ENCODE measurements at regions of chr6 and their contacts with region 1.

Region 1: GRCh38 chr6:27295301-27296081 is 16.6 kb downstream of the POM121L2 start:
- DNase-seq: peak; percentile 65 to 93 (median 72)
- ATAC-seq: peak; percentile 67
- H3K4me3 ChIP-seq: peak overlapping the region; percentile 67
- H3K27ac ChIP-seq: peak overlapping the region; percentile 17; the same call in 2 of the 3 replicates
- H3K4me1 ChIP-seq: peaks cover 4 to 14% of the 10 kb centered on the region in 2 experiments; a peak in 3 of 5 replicates
- H3K27me3 ChIP-seq: no peaks in the 10 kb centered on the region
- CTCF ChIP-seq: no peak
- EP300 ChIP-seq: no peak; the same call in none of the 2 replicates
- POLR2A ChIP-seq: no peak
- RAD21 ChIP-seq: peak in 1 of 2 experiments; percentile 22; a peak in 2 of 4 replicates

Region 2: DNA sequence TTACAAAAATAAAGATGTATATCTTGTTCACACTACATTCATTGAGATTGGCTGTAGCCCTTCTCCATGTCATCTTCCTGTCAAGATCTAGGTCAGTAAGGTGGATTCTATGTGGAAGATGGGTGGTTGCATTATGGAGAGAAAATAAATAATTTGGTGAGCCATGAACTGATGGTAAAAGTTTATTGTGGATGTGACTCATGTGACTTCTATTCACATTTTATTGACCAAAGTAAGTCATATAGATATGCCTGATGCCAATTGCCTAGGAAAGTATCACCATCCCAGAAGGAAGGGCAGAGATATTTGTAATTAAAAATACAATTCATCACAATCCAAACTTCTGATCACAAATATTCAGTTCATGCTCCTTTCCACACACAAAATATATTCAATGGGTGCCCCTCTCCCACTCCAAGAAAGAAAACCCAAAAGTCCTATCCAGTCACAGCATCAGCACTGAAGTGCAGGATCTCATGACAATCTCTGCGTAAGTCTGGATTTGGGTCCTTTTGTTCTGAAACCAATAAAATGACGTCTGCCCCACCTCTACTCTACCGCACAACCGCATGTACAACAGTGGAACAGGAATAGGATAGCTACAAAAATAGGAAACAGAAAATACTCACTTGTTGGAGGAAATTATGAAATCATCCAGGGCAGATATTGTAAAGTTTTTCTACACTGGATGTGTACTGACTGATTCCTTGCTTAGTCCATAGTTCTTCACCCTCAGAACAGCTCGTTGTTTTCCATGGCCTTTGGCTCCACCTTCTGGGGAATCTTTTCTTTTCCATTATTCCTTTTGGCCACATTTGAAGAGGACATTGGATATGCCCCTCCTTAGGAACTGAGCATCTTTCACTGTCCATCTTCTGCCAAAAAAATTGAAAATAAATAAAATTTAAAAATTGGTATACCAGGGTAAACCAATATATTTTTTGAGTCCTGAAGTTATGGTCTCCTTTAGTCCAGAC is 1405.3 kb before region 1 on chr6:
- CTCF ChIA-PET with region 1: no interaction called
- POLR2A ChIA-PET with region 1: no interaction called
- in situ Hi-C with region 1: no loop called
- intact Hi-C with region 1: no loop called
- DNase-seq: peak; percentile 16 to 56 (median 22)
- ATAC-seq: peak; percentile 87
- H3K4me3 ChIP-seq: no peak overlapping the region
- H3K27ac ChIP-seq: no peak overlapping the region
- H3K4me1 ChIP-seq: no peaks in the 10 kb centered on the region
- H3K27me3 ChIP-seq: no peaks in the 10 kb centered on the region
- CTCF ChIP-seq: peak; percentile 55 to 83 (median 64)
- EP300 ChIP-seq: no peak
- POLR2A ChIP-seq: no peak
- RAD21 ChIP-seq: peak; percentile 95 to 96

Region 3: DNA sequence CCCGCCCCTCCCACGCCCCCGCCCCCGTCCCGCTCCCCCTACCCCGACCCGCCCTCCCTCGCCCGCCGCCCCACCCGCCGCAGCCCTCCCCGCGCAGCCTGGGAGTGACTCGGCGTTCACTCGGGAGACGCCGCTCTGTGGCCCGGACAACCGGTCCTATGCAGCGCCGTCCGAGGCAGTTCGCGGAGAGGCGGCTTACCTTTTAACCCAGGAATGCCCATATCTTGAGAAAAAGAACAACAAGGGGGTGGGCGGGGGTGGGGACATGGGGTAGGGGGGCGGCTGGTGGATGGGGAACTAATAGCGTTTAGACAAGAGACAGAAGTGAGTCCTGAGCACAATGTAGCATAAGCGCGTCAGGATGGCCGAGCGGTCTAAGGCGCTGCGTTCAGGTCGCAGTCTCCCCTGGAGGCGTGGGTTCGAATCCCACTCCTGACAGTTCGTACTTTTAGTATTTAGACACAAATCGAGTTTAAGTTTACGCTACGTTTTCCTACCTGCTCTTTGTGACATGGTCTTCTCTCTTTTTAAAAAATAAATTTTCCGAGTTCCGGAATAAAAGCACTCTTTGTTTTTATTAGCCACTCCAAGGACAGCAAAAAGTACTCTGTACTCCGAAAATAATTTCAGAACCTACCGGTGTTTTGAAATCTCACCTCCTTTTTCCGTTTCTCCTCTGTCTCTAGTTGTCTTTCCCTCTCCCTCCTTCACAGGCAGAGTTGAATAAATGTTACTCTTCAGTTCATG is 774.5 kb before region 1 on chr6:
- CTCF ChIA-PET with region 1: no interaction called
- POLR2A ChIA-PET with region 1: no interaction called
- in situ Hi-C with region 1: no loop called
- intact Hi-C with region 1: no loop called
- DNase-seq: peak; percentile 94 to 98 (median 98)
- ATAC-seq: peak; percentile 78
- H3K4me3 ChIP-seq: peak overlapping the region; percentile 70
- H3K27ac ChIP-seq: peak overlapping the region; percentile 98
- H3K4me1 ChIP-seq: peaks cover 13 to 28% of the 10 kb centered on the region in 2 experiments; a peak in 4 of 5 replicates
- H3K27me3 ChIP-seq: no peaks in the 10 kb centered on the region
- CTCF ChIP-seq: peak in 1 of 3 experiments; percentile 8; a peak in 2 of 6 replicates
- EP300 ChIP-seq: peak; percentile 68
- POLR2A ChIP-seq: no peak
- RAD21 ChIP-seq: no peak

Region 4: GRCh38 chr6:26657256-26657655 is 638.2 kb before region 1 on chr6:
- CTCF ChIA-PET with region 1: no interaction called
- POLR2A ChIA-PET with region 1: no interaction called
- in situ Hi-C with region 1: no loop called
- intact Hi-C with region 1: no loop called
- DNase-seq: no peak
- ATAC-seq: no peak
- H3K4me3 ChIP-seq: no peak overlapping the region
- H3K27ac ChIP-seq: no peak overlapping the region
- H3K4me1 ChIP-seq: peaks cover 3 to 14% of the 10 kb centered on the region in 2 experiments; a peak in 3 of 5 replicates
- H3K27me3 ChIP-seq: no peaks in the 10 kb centered on the region
- CTCF ChIP-seq: no peak
- EP300 ChIP-seq: no peak
- POLR2A ChIP-seq: no peak
- RAD21 ChIP-seq: no peak

Region 5: DNA sequence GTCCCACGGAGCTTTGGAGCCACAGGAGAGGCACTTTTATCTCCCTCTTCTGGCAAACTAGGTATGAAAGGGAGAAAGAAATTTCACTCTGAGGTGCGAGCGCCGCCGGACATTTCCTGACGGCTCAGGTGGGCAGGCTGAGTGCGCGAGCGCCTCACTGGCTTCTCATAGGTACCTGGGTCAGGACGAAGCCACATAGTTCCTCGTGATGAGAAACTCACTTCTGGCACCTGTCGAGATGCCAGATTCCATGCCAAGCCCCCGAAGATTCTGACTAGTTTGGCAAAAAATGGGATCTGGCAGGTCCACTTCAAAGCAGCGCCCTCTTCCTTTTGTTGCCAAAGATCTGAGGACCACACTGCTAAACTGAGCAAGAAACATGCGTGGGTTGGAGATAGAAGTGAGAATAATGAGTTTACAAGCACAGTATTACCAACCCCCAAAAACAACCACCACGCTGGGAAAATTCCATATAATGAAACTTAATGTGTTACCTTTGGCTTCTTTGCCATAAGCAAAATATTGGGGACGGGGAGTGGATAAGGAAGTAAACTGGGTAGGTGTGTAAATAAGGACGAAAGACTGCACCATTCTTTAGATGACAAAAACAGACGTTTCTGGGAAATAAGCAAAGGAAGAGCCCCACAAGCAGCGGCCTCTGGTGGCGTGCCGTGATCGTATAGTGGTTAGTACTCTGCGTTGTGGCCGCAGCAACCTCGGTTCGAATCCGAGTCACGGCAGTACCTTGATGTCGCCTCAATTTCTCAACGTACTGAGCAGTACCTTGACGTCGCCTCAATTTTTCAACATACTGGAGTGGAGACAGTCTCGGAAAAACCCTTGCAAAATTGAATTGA is 137.8 kb before region 1 on chr6:
- CTCF ChIA-PET with region 1: no interaction called
- POLR2A ChIA-PET with region 1: no interaction called
- in situ Hi-C with region 1: no loop called
- intact Hi-C with region 1: loop called (anchors 5 kb)
- DNase-seq: peak; percentile 63 to 93 (median 70)
- ATAC-seq: peak; percentile 87
- H3K4me3 ChIP-seq: peak overlapping the region; percentile 54
- H3K27ac ChIP-seq: peak overlapping the region; percentile 46
- H3K4me1 ChIP-seq: peaks cover 10% of the 10 kb centered on the region in 2 experiments; a peak in 3 of 5 replicates
- H3K27me3 ChIP-seq: no peaks in the 10 kb centered on the region
- CTCF ChIP-seq: peak; percentile 73 to 77 (median 75)
- EP300 ChIP-seq: peak; percentile 49
- POLR2A ChIP-seq: 0 out of 2 replicates have a peak, but pooled peaks have one; percentile 12
- RAD21 ChIP-seq: peak; percentile 71 to 76

Region 6: DNA sequence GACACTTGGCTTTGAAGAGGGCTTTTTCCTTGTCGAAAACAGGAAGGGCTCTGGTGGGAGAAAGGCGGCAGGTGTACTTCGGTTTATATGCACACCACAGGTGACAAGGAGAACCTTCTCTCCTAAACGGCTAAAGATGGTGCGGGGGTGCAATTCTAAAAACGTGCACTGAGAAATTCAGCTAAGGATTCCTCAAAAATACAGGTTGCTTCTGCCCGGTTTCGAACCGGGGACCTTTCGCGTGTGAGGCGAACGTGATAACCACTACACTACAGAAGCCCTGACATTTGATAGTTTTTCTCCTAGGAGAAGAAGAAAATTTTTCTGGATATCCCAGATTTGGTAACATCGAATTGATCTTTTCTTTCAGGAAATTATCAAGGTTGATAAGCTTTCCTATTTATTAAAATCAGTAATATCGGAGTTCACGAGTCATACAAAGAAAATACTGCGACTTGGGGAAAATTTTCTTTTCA is 15.4 kb before region 1 on chr6:
- CTCF ChIA-PET with region 1: no interaction called
- POLR2A ChIA-PET with region 1: interaction called, 4 read pairs
- in situ Hi-C with region 1: no loop called
- intact Hi-C with region 1: loop called (anchors 2 kb)
- DNase-seq: peak; percentile 68 to 90 (median 76)
- ATAC-seq: peak; percentile 81
- H3K4me3 ChIP-seq: peak overlapping the region; percentile 58
- H3K27ac ChIP-seq: peak overlapping the region; percentile 70
- H3K4me1 ChIP-seq: peaks cover 4 to 6% of the 10 kb centered on the region in 2 experiments; a peak in 3 of 5 replicates
- H3K27me3 ChIP-seq: no peaks in the 10 kb centered on the region
- CTCF ChIP-seq: no peak; a peak in 2 of 6 replicates
- EP300 ChIP-seq: peak; percentile 65
- POLR2A ChIP-seq: no peak
- RAD21 ChIP-seq: no peak; a peak in 1 of 4 replicates

Region 7: DNA sequence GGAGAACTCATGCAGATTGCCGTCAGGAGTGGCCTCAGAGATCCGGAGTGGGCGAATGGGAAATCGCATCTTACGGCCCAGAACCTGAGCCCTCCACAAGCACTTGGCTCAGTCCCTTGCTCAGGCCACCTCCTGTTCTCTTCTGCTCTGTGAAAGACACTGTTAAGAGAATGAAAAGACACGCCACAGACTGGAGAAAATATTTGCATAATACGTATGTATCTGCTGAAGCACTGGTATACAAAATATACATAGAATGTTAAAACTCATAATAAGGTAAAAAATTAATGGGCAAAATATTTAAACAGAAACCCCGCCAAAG is 17.4 kb after region 1 on chr6:
- CTCF ChIA-PET with region 1: no interaction called
- POLR2A ChIA-PET with region 1: no interaction called
- in situ Hi-C with region 1: no loop called
- intact Hi-C with region 1: no loop called
- DNase-seq: no peak
- ATAC-seq: no peak
- H3K4me3 ChIP-seq: no peak overlapping the region
- H3K27ac ChIP-seq: no peak overlapping the region
- H3K4me1 ChIP-seq: peaks cover 0 to 9% of the 10 kb centered on the region in 2 experiments; a peak in 1 of 5 replicates
- H3K27me3 ChIP-seq: no peaks in the 10 kb centered on the region
- CTCF ChIP-seq: no peak
- EP300 ChIP-seq: no peak
- POLR2A ChIP-seq: no peak
- RAD21 ChIP-seq: no peak

Region 8: GRCh38 chr6:27332692-27333641 is 37.5 kb after region 1 on chr6:
- CTCF ChIA-PET with region 1: no interaction called
- POLR2A ChIA-PET with region 1: interaction called, 8 read pairs
- in situ Hi-C with region 1: no loop called
- intact Hi-C with region 1: loop called (anchors 2 kb)
- DNase-seq: peak; percentile 67 to 91 (median 78)
- ATAC-seq: peak; percentile 92
- H3K4me3 ChIP-seq: peak overlapping the region; percentile 64
- H3K27ac ChIP-seq: peak overlapping the region; percentile 82
- H3K4me1 ChIP-seq: peaks cover 0 to 5% of the 10 kb centered on the region in 2 experiments; a peak in 2 of 5 replicates
- H3K27me3 ChIP-seq: no peaks in the 10 kb centered on the region
- CTCF ChIP-seq: peak in 1 of 3 experiments; percentile 18; a peak in 1 of 6 replicates
- EP300 ChIP-seq: peak; percentile 71
- POLR2A ChIP-seq: no peak
- RAD21 ChIP-seq: no peak; a peak in 2 of 4 replicates

Region 9: DNA sequence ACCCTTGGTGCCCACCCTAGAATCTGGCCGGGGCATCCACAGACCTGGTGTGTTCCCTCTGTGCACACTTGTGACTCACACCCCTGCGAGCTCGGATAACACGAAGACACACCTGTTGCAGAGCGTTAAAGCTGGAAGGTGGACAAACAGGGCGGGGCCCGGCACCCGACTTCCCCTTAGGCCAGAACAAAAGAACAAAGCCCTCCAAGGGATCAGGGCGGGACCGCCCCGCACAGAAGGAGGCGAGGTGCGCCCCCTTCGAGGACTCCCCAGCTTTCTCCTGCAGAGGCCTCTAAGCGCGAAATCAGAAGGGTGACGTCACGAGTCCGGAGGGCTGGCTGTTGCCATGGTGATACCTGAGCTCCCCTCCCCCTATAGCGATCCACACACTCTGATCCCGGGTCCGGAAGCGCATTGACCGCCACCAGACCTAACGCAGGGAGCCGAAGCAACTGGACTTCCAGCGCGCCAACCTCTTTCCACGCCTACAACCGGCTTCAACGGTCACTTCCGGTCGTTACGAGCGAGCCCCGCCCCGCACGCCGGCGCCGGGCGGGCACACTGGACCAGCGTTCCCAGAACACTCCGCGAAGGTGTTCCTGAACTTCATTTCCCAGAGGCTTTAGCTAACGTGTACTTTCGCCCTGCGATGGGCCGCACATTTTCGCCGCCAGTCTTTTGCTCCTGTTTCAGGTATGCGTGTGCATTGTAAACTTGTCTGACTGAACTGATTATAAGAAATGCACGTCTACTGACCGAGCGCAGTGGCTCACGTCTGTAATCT is 177.3 kb after region 1 on chr6 and contains the start of gene ZNF184:
- CTCF ChIA-PET with region 1: interaction called, 3 read pairs
- POLR2A ChIA-PET with region 1: interaction called, 7 read pairs
- in situ Hi-C with region 1: no loop called
- intact Hi-C with region 1: loop called (anchors 2 kb)
- DNase-seq: peak; percentile 97 to 100 (median 98)
- ATAC-seq: peak; percentile 91
- H3K4me3 ChIP-seq: peak within 1 kb of the TSS; percentile 75
- H3K27ac ChIP-seq: peak within 1 kb of the TSS; percentile 91
- H3K4me1 ChIP-seq: peaks cover 8 to 11% of the 10 kb centered on the region in 2 experiments; a peak in 4 of 5 replicates
- H3K27me3 ChIP-seq: no peaks in the 10 kb centered on the region
- CTCF ChIP-seq: peak; percentile 31 to 42 (median 37); a peak in 5 of 6 replicates
- EP300 ChIP-seq: peak; percentile 92
- POLR2A ChIP-seq: peak; percentile 92
- RAD21 ChIP-seq: peak; percentile 10 to 18; a peak in 2 of 4 replicates
- polyA plus RNA-seq, gene ZNF184: 7.6 to 12.8 TPM

Region 10: DNA sequence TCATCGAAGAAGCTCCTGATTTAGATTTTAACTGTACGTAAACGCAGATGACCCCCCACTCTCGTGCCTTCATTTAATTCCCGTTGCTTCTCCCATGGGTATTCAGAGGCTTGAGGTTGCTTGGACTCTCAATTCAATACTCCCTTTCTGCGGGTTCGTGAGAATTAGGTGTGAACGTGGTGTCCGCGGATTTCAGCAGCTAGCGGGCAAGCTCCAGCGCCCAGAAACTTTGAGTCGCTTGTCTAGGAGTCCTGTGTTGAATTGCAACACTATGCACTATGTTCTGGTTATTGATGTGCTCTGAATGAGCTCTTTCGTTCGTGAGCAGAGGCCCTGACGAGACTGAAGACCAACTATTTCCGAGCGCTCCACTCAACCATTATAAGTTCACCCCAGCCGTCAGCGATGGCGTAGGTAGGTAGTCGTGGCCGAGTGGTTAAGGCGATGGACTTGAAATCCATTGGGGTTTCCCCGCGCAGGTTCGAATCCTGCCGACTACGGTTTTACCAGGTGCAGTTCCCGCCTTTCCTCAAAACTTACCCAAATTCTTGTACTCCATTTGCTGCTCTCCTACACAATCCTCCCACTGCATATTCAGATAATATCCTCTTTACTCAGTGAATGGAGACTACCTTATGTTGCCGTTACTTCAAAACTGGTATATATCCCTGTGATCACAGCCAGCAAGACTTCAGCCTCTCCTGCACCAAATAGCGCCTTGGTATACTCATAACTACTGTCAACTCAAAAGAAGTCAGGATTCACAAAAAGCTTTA is 250.0 kb after region 1 on chr6:
- CTCF ChIA-PET with region 1: no interaction called
- POLR2A ChIA-PET with region 1: no interaction called
- in situ Hi-C with region 1: no loop called
- intact Hi-C with region 1: loop called (anchors 5 kb)
- DNase-seq: peak; percentile 52 to 97 (median 68)
- ATAC-seq: peak; percentile 62
- H3K4me3 ChIP-seq: peak overlapping the region; percentile 50
- H3K27ac ChIP-seq: peak overlapping the region; percentile 77
- H3K4me1 ChIP-seq: peaks cover 4 to 25% of the 10 kb centered on the region in 2 experiments; a peak in 4 of 5 replicates
- H3K27me3 ChIP-seq: no peaks in the 10 kb centered on the region
- CTCF ChIP-seq: no peak
- EP300 ChIP-seq: peak; percentile 70
- POLR2A ChIP-seq: no peak
- RAD21 ChIP-seq: peak in 1 of 2 experiments; percentile 33; a peak in 1 of 4 replicates

Region 11: GRCh38 chr6:27687154-27688013 is 391.9 kb after region 1 on chr6:
- CTCF ChIA-PET with region 1: no interaction called
- POLR2A ChIA-PET with region 1: no interaction called
- in situ Hi-C with region 1: no loop called
- intact Hi-C with region 1: loop called (anchors 10 kb)
- DNase-seq: peak; percentile 78 to 97 (median 82)
- ATAC-seq: peak; percentile 89
- H3K4me3 ChIP-seq: peak overlapping the region; percentile 63
- H3K27ac ChIP-seq: peak overlapping the region; percentile 78
- H3K4me1 ChIP-seq: peaks cover 5 to 24% of the 10 kb centered on the region in 2 experiments; a peak in 4 of 5 replicates
- H3K27me3 ChIP-seq: no peaks in the 10 kb centered on the region
- CTCF ChIP-seq: peak; percentile 92 to 96 (median 95)
- EP300 ChIP-seq: 0 out of 2 replicates have a peak, but pooled peaks have one; percentile 14
- POLR2A ChIP-seq: no peak
- RAD21 ChIP-seq: peak; percentile 71 to 87

Measured in K562 (cell line).